Posterior vena cava (tissue), 2 donors: ENCODE measurements at regions of chr3 and their contacts with region 1.

Region 1: DNA sequence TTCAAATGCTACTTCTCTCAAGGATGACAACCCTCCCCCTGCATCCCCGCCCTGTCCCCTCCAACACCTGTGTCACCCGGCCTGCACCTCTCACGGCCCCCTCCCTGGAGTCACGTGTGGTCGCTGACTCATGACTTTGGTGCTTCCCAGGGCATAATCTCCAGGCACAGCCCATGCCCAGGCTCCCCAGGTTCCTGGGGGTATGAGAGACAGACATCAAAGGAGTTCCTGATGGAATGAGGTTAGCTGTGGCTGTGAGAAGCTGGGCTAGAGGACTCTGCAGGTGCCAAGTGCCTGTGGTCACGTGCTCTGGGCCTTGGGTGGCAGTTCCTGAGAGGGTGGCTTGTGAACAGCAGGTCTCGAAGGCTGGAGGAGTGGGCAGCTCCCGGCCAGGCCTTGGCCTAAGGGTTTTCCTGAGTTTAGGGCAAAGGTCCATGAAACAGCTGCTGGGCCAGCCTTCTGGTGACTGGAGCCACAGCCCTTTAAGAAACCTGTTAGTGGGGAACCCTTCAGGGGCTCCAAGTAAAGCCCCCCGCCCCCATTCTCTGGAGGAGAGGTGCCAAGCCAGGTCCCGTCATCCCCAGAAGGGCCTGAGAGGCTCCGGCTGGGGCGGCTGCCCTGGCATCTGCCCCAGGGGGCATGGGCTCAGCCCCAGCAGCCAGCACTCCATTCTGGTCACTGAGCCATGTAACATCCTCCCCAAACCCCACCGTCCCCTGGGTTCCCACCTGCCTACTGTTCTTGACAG is 230.0 kb downstream of the XXYLT1 start:
- DNase-seq: peak; percentile 76

Region 2: GRCh38 chr3:194218646-194219453 is 822.1 kb before region 1 on chr3:
- intact Hi-C with region 1: loop called in 1 of 2 experiments (anchors 5 kb)
- DNase-seq: no peak

Region 3: DNA sequence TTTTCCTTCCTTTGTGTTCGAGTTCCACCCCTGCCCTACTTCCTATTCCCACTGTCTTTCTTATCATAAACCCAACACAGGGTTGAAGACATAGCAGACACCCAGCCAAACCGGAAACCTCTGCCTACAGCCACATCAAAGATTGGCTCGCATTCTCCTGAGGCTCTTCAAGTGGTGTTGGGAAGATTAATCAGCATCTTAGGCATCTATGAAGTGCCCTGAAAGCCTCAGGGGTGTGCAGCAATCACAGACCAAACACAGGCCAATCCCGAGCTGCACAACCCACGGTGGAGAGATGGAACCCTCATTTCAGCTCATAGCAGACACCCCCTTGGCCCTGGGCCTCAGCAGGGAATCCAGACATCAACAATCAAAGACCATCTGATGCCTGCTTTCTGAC is 25.9 kb before region 1 on chr3:
- intact Hi-C with region 1: no loop called
- DNase-seq: peak; percentile 46

Region 4: DNA sequence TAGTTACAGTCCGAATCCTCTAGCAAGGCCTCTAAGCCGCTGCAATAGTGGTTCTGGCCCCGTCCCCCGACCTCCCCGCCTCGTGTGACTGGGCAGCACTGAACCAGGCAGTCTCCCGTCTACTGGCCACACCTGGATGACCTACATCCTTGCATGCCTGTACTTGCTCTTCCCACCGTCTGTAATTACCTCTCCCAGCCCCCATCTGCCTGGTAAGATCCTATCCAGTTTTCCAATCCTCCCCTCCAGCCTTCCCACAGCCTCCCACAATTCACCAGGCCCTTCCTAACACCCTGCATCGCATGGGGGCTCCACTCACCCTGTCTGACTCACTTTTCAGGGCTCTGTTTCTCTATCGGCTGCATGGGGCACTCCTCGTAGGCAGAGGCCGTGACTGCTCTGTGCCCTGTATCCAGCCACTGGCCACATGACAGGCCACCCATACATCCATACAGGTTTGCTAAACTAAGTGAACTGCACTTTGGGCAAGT is 197.2 kb after region 1 on chr3:
- intact Hi-C with region 1: no loop called
- DNase-seq: peak; percentile 52

Region 5: DNA sequence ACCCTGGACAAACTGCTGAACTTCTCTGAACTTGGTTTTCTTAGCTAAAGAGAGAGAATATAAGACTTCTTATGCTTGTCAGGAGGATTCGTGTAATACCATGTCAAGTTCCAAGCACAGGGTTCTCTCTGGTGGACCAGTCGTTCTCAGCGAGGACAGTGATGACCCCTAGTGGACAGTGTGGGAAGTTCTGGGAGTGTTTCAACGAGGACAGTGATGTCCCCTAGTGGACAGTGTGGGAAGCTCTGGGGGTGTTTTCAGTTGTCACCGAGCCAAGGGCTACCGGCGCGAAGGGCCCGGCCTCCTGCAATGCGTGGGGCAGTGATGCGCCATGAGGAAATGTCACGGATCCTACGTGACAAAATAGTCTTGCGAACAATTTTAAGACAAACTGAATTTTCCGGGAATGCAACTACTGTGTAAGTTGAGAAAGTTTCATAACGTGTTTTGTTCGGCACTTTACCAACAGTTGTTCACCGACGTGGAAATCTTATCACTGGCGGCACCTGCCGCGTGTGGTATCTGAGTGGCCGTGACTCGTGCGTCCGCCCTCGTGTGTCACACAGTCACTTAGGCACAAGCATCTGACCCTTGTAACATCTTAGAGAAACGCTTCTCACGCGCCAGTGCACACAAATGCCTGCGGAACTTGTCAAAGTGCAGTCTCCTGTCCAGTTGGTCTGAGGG is 810.1 kb after region 1 on chr3:
- intact Hi-C with region 1: no loop called
- DNase-seq: peak; percentile 90